Activated CD4-positive, alpha-beta T cell treated with anti-CD3 and anti-CD28 coated beads, Interleukin-2, amount 10 ng/mL, durations not matched to agents 24 days and 14 days (primary cell): ENCODE measurements at regions of chr19 and their contacts with region 1.

Region 1: GRCh38 chr19:12564016-12564664 is 12.9 kb upstream of the ZNF564 start:
- DNase-seq: peak; percentile 98
- H3K4me3 Mint-ChIP-seq: no peak overlapping the region
- H3K27ac Mint-ChIP-seq: no peak overlapping the region
- H3K4me1 Mint-ChIP-seq: peaks cover 5% of the 10 kb centered on the region
- H3K27me3 Mint-ChIP-seq: no peaks in the 10 kb centered on the region

Region 2: DNA sequence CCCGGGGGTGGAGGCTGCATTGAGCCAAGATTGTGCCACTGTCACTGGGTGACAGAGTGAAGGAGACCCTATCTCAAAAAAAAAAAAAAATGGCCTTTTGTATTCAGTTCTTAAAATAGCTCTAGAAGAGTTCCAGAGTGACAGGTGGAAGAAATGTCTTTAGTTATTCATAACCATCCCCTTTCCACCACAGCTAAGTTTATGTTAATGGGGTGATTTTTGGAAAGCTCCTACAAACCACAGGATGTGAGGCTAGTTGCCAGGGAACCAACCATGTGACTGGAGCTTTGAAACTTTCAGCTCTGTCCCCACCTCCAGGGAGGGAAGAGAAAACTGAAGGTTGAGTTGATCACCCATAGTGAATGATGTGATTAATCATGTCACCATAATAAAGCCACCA is 39.6 kb after region 1 on chr19:
- intact Hi-C with region 1: loop called (anchors 5 kb)
- DNase-seq: peak; percentile 91
- H3K4me3 Mint-ChIP-seq: peak overlapping the region; percentile 12
- H3K27ac Mint-ChIP-seq: peak overlapping the region; percentile 75
- H3K4me1 Mint-ChIP-seq: peaks cover 9% of the 10 kb centered on the region
- H3K27me3 Mint-ChIP-seq: no peaks in the 10 kb centered on the region

Region 3: DNA sequence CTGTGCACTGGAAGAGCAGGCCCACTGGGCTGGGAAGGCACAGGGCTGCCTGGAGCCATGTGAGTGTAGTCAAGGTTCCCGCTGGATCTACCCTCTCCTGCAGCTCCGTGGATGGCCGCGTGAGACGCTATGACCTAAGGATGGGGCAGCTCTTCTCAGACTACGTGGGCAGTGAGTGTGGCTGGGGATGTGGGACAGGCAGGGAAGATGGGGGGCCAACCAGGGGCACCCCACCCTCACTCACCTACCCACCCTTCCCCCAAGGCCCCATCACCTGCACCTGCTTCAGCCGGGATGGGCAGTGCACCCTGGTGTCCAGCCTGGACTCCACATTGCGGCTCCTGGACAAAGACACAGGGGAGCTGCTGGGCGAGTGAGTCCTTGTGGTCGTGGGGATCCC is 108.6 kb after region 1 on chr19:
- intact Hi-C with region 1: loop called (anchors 1 kb)
- DNase-seq: no peak
- H3K4me3 Mint-ChIP-seq: no peak overlapping the region
- H3K27ac Mint-ChIP-seq: no peak overlapping the region
- H3K4me1 Mint-ChIP-seq: peaks cover 35% of the 10 kb centered on the region
- H3K27me3 Mint-ChIP-seq: no peaks in the 10 kb centered on the region